AG04450 (cell line): ENCODE measurements at regions of chr2 and their contacts with region 1.

Region 1: DNA sequence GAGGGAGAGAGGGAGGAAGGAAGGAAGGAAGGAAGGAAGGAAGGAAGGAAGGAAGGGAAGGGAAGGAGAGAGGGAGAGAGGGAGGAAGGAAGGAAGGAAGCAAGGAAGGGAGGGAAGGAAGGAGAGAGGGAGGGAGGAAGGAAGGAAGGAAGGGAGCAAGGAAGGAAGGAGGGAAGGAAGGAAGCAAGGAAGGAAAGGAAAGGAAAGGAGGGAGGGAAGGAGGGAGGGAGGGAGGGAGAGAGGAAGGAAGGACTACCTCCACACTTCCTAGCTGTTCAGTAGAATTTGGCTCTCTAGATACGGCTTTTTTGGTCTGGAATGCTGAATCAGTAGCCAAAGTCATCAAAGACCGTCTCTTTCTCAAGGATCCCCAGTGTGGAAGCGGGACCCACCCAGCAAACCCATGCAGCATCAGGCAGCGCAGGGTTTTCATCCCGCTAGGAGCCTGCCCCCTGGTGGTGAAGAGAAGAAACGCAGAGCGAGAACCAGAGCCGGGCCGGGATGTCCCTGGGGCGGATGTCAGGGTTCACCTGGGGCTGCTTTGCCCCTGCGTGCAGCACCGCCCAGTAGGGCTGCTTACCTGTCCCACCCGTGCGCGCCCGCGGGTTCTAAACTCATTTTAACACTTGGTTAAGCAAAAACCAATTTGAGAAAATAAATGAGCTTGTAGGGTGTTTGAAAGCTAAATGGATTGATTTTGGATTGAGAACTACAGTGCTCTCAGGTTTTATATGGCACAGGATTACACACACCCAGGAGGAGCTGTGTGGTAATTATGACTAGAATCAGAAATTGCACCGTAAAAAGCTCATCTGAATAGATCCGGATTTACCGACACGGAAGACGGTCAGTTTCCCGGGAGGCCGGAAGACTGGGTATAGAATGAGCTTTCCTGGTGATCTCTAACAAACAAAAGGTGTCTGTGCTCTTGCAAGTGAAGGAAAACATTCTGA is 48.1 kb upstream of the ARL4C start:
- DNase-seq: no peak
- H3K4me3 ChIP-seq: no peak overlapping the region
- H3K27ac ChIP-seq: no peak overlapping the region
- H3K27me3 ChIP-seq: peaks cover 2% of the 10 kb centered on the region
- CTCF ChIP-seq: peak; percentile 88

Region 2: DNA sequence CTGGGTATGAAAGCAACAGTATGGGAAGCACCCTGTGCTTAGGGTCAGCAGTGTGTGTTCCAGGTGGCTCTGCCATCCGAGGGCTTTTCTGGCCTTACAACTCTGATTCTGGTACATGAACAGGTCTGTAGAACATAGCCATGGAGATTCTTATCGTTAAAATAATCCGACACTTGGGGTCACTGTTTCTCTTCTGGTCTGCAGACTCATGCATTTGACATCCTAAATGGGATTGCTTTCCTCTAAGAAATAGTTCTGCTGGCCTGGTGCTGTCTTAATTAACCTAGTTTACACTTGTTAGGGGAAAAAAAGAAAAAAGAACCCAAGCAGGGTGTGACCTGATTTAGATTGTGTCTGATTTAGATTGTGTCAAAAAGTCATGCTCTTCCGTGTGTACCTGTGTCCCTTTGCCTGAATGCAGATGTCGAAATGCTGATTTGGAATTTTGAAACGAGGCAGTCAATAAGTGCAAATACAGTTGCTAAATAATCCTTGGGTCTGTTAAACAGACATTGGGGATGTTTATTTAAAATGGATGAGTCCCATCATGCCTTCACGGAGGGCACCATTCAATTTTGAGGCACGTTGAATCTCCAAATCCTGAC is 568.1 kb before region 1 on chr2:
- CTCF ChIA-PET with region 1: interaction called, 53 read pairs
- POLR2A ChIA-PET with region 1: no interaction called
- DNase-seq: peak; percentile 45
- H3K4me3 ChIP-seq: no peak overlapping the region
- H3K27ac ChIP-seq: no peak overlapping the region
- H3K27me3 ChIP-seq: no peaks in the 10 kb centered on the region
- CTCF ChIP-seq: peak; percentile 56

Region 3: DNA sequence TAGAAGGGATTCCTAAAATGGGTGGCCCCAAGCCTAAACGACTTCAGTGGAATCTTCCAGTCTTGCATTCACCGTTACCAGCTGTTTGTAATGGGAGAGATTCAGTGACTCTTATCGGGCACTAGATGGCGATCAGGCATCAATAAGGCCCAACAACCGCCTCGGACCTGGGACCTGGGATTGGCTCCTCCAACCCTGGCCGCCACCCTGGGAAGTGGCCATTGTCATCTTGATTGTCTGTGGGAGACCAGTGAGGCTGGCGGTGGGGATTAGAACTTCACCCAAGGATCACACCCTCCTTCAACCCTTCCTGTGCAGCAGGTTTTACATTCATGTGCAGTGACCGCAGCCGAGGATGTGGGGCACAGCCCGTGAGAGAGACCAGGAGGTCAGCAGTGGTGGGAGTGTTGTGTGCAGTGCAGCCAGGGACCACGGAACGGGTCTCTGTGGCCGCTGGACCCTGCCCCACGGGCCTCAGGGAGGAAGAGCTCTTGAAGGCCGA is 409.2 kb before region 1 on chr2:
- CTCF ChIA-PET with region 1: interaction called, 53 read pairs
- POLR2A ChIA-PET with region 1: no interaction called
- DNase-seq: peak; percentile 39
- H3K4me3 ChIP-seq: no peak overlapping the region
- H3K27ac ChIP-seq: no peak overlapping the region
- H3K27me3 ChIP-seq: peaks cover under 1% of the 10 kb centered on the region
- CTCF ChIP-seq: peak; percentile 91

Region 4: DNA sequence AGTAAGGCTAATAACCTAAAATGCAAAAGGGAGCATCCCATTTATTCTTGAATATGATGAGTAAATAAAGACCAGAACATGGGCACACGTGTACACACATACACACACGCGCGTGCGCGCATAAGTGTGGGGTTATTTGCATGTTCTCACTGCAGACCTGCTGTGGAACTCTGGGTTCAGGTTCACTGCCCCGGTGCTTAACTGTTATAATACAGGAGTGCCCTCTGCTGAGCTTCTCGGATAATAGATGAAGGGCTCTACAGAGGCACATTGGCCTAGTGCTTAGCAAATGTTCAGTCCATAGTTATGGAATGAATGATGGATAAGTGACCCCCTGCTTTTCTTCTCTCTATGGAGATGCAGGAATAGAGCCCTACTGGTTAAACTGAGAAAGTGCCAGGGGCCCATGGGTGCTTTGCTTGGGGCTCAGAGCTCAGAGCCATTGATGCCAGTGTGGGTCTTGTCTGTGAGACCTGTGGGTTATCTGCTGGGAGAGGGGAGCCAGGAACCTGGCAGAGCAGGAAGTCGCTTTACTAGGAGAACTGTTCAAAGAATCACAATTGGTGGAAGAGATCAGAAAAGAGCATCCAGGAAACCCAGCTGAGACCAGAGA is 44.4 kb before region 1 on chr2:
- CTCF ChIA-PET with region 1: interaction called, 27 read pairs
- POLR2A ChIA-PET with region 1: no interaction called
- DNase-seq: no peak
- H3K4me3 ChIP-seq: no peak overlapping the region
- H3K27ac ChIP-seq: no peak overlapping the region
- H3K27me3 ChIP-seq: no peaks in the 10 kb centered on the region
- CTCF ChIP-seq: peak; percentile 64

Region 5: DNA sequence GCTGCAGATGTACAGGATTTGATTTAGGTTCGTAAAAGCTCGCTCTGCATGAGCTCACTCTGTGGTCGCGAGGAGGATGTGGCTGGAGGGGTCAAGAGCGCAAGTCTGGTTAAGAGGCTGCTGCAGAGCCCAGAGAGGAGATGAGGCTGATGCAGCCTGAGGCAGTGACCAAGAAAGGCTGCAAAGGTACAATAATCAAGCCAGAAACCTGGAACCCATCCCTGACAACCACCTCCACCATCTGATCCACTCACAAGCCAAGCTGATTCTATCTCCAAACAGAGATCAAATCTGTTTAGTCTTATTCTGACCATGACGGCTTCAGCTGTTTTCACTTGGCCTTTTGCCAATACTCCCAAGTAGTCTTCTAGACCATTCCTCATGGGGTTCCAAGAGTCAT is 10.8 kb after region 1 on chr2:
- CTCF ChIA-PET with region 1: interaction called, 19 read pairs
- POLR2A ChIA-PET with region 1: no interaction called
- DNase-seq: no peak
- H3K4me3 ChIP-seq: no peak overlapping the region
- H3K27ac ChIP-seq: no peak overlapping the region
- H3K27me3 ChIP-seq: no peaks in the 10 kb centered on the region
- CTCF ChIP-seq: no peak

Region 6: GRCh38 chr2:234632527-234633391 is 87.8 kb after region 1 on chr2:
- CTCF ChIA-PET with region 1: no interaction called
- POLR2A ChIA-PET with region 1: no interaction called
- DNase-seq: peak; percentile 98
- H3K4me3 ChIP-seq: no peak overlapping the region
- H3K27ac ChIP-seq: peak overlapping the region; percentile 96
- H3K27me3 ChIP-seq: no peaks in the 10 kb centered on the region
- CTCF ChIP-seq: no peak

Region 7: GRCh38 chr2:234950730-234951663 is 406.1 kb after region 1 on chr2:
- CTCF ChIA-PET with region 1: interaction called, 15 read pairs
- POLR2A ChIA-PET with region 1: no interaction called
- DNase-seq: no peak
- H3K4me3 ChIP-seq: peak overlapping the region; percentile 67
- H3K27ac ChIP-seq: peak overlapping the region; percentile 94
- H3K27me3 ChIP-seq: no peaks in the 10 kb centered on the region
- CTCF ChIP-seq: no peak

Region 8: DNA sequence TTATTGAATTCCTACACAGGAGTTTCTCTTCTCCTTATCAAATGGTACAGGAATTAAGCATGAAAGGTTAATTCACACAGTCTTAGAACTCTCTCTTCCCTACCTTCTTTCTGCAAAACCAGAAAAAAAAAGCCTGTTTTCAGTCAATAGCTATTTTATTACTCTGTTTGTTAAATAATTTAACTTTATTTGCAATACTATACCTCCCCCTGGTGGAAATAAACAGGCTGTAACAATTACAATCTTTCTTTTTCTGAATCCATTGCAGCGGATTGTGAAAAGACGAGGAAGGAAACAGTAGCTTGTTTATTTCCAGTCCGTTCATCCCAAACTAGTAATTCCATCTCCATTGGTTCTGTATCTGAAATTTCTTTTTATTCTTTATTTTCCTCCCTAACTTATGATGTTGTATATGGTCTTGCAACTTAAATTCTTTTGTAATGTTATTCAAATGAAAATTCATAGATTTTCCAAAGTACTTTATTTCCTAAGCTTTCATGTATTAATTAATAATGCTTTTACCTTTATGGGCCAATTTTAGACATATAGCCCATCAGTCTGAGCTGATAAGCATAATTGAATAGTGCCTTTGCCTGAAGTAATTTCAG is 572.1 kb after region 1 on chr2:
- CTCF ChIA-PET with region 1: interaction called, 107 read pairs
- POLR2A ChIA-PET with region 1: no interaction called
- DNase-seq: no peak
- H3K4me3 ChIP-seq: no peak overlapping the region
- H3K27ac ChIP-seq: no peak overlapping the region
- H3K27me3 ChIP-seq: no peaks in the 10 kb centered on the region
- CTCF ChIP-seq: peak; percentile 64